GM12878 (cell line): ENCODE measurements at regions of chr2 and their contacts with region 1.

Region 1: DNA sequence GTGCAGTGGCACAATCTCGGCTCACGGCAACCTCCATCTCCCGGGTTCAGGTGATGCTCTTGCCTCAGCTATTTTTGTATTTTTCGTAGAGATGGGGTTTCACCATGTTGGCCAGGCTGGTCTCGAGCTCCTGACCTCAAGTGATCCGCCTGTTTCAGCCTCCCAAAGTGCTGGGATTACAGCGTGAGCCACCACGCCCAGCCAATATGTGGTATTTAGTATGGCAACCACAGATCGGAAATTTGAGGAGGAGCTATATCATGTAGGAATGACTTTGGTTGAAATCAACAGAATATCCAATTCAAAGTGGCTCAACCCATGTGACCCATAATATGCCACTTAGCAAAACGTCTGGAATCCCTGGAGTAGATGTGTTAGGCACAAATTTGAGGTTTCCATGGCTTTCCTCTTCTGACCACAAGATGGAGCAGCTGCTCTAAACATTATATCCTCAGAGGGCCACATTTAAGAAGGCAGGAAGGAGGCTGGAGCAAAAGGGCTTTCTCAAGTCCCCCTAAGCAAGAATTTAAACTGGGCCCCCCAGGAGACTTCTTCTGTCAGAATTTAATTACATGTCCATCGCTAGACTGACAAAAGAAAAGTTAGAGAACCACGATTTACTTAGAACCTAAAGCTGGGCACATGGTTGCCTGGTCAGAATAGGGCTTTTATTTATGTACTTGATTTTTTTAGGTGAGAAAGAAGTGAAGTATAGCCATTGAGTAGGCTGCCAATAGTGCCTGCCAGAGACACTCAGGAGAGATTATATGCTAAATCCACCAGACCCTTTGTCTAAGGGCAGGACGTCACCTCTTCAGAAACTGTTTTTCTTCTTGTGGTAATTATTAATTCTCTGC is 49.6 kb upstream of the ITSN2 start:
- DNase-seq: peak; percentile 31
- ATAC-seq: peak; percentile 91
- H3K4me3 ChIP-seq: no peak overlapping the region
- H3K27ac ChIP-seq: no peak overlapping the region
- H3K4me1 ChIP-seq: no peaks in the 10 kb centered on the region
- H3K27me3 ChIP-seq: no peaks in the 10 kb centered on the region
- CTCF ChIP-seq: peak; percentile 79 to 89 (median 82)
- EP300 ChIP-seq: no peak
- POLR2A ChIP-seq: no peak
- RAD21 ChIP-seq: peak; percentile 97

Region 2: GRCh38 chr2:24394998-24395397 is 14.9 kb before region 1 on chr2:
- CTCF ChIA-PET with region 1: interaction called, 12 read pairs
- POLR2A ChIA-PET with region 1: no interaction called
- RAD21 ChIA-PET with region 1: no interaction called
- SMC1A ChIA-PET with region 1: interaction called, 6 read pairs
- in situ Hi-C with region 1: no loop called
- intact Hi-C with region 1: no loop called
- DNase-seq: no peak
- ATAC-seq: no peak
- H3K4me3 ChIP-seq: no peak overlapping the region
- H3K27ac ChIP-seq: no peak overlapping the region
- H3K4me1 ChIP-seq: no peaks in the 10 kb centered on the region
- H3K27me3 ChIP-seq: no peaks in the 10 kb centered on the region
- CTCF ChIP-seq: no peak
- EP300 ChIP-seq: no peak
- POLR2A ChIP-seq: no peak
- RAD21 ChIP-seq: no peak

Region 3: GRCh38 chr2:24448797-24449196 is 38.9 kb after region 1 on chr2:
- CTCF ChIA-PET with region 1: no interaction called
- POLR2A ChIA-PET with region 1: no interaction called
- RAD21 ChIA-PET with region 1: no interaction called
- SMC1A ChIA-PET with region 1: no interaction called
- in situ Hi-C with region 1: no loop called
- intact Hi-C with region 1: no loop called
- DNase-seq: no peak
- ATAC-seq: no peak
- H3K4me3 ChIP-seq: no peak overlapping the region
- H3K27ac ChIP-seq: no peak overlapping the region
- H3K4me1 ChIP-seq: no peaks in the 10 kb centered on the region
- H3K27me3 ChIP-seq: no peaks in the 10 kb centered on the region
- CTCF ChIP-seq: no peak
- EP300 ChIP-seq: no peak
- POLR2A ChIP-seq: no peak
- RAD21 ChIP-seq: no peak

Region 4: DNA sequence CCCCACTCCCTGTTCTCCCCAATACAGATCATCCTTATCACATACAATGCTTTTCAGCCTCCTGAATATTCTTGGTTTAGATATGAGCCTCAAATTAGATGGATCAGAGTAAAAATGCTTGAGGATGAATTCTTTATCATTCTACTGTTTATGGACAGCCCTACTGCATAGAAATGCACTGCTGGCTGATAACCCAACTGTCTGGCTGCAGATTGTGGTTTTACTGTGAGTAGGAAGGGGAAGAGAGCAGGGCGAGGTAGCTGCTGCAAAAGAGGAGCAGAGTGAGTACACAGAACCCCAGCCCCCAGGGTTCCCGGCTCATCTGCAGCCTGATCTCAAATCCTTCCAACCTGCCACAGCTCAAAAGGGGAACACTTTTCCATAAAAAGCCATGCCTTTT is 51.8 kb after region 1 on chr2:
- CTCF ChIA-PET with region 1: no interaction called
- POLR2A ChIA-PET with region 1: no interaction called
- RAD21 ChIA-PET with region 1: no interaction called
- SMC1A ChIA-PET with region 1: no interaction called
- in situ Hi-C with region 1: no loop called
- intact Hi-C with region 1: no loop called
- DNase-seq: no peak
- ATAC-seq: 0 out of 3 replicates have a peak, but pooled peaks have one; percentile 19
- H3K4me3 ChIP-seq: no peak overlapping the region
- H3K27ac ChIP-seq: no peak overlapping the region
- H3K4me1 ChIP-seq: no peaks in the 10 kb centered on the region
- H3K27me3 ChIP-seq: no peaks in the 10 kb centered on the region
- CTCF ChIP-seq: no peak
- EP300 ChIP-seq: no peak
- POLR2A ChIP-seq: no peak
- RAD21 ChIP-seq: no peak

Region 5: GRCh38 chr2:24792874-24793760 is 383.2 kb after region 1 on chr2 and contains the starts of genes CENPO and PTRHD1:
- CTCF ChIA-PET with region 1: interaction called, 10 read pairs
- POLR2A ChIA-PET with region 1: no interaction called
- RAD21 ChIA-PET with region 1: interaction called, 3 read pairs
- SMC1A ChIA-PET with region 1: interaction called, 3 read pairs
- in situ Hi-C with region 1: no loop called
- intact Hi-C with region 1: no loop called
- DNase-seq: peak; percentile 92
- ATAC-seq: peak; percentile 97
- H3K4me3 ChIP-seq: peak within 1 kb of the TSS; percentile 97
- H3K27ac ChIP-seq: peak within 1 kb of the TSS; percentile 98
- H3K4me1 ChIP-seq: peaks cover 6% of the 10 kb centered on the region
- H3K27me3 ChIP-seq: no peaks in the 10 kb centered on the region
- CTCF ChIP-seq: peak; percentile 36 to 40 (median 37); a peak in 5 of 6 replicates
- EP300 ChIP-seq: no peak
- POLR2A ChIP-seq: peak; percentile 93
- RAD21 ChIP-seq: no peak
- polyA plus RNA-seq, gene CENPO: 18.7 to 23.1 TPM
- polyA plus RNA-seq, gene PTRHD1: 30.6 to 43.9 TPM

Region 6: GRCh38 chr2:24818721-24819167 is 408.8 kb after region 1 on chr2:
- CTCF ChIA-PET with region 1: interaction called, 17 read pairs
- POLR2A ChIA-PET with region 1: no interaction called
- RAD21 ChIA-PET with region 1: interaction called, 4 read pairs
- SMC1A ChIA-PET with region 1: interaction called, 7 read pairs
- in situ Hi-C with region 1: no loop called
- intact Hi-C with region 1: no loop called
- DNase-seq: no peak
- ATAC-seq: no peak
- H3K4me3 ChIP-seq: no peak overlapping the region
- H3K27ac ChIP-seq: no peak overlapping the region
- H3K4me1 ChIP-seq: no peaks in the 10 kb centered on the region
- H3K27me3 ChIP-seq: no peaks in the 10 kb centered on the region
- CTCF ChIP-seq: no peak
- EP300 ChIP-seq: no peak
- POLR2A ChIP-seq: no peak
- RAD21 ChIP-seq: no peak

Region 7: DNA sequence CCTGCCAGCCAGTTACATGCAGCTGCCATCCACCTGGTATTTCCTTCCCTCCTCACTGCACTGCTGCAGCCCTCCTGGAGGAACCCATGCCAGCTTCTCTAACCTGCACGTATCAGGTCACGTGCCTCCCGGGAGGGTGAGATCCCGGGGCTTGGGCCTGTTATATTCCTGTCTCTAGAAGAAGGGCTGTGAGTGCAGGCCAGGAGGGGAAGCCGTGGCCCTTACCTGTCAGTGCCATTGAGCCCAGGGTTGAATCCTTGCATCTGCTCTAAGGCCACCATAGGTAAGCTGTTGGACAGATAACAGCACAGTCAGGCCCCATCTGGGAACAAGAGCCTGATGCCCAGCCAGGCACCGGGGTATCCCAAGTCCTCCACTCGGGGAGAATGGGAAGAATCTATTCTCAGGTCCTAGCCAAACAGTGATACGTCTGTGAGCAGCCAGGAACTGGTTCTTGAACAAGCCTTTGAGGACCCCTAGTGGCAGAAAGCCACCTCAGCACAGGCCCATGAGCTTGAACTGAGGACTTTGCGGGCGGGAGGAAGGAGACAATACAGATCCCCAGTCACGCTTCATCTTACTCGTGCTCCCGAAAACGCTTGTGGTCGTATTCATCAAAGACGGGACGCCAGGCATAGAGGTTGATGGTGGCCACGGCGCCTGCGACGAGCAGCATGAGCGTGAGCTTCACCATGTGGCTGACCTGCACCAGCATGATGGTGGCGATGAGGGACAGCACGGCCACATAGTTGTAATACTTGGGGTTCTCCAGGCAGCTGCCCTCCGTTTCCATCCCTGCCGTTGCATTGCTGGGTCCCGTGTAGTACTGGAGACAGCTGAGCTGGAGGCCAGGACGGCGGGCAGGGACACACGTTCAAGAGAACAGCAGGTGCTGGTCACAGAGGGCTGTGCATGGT is 417.7 kb after region 1 on chr2:
- CTCF ChIA-PET with region 1: interaction called, 124 read pairs
- POLR2A ChIA-PET with region 1: interaction called, 3 read pairs
- RAD21 ChIA-PET with region 1: interaction called, 66 read pairs
- SMC1A ChIA-PET with region 1: interaction called, 55 read pairs
- in situ Hi-C with region 1: loop called (anchors 5 kb)
- intact Hi-C with region 1: loop called (anchors 1 kb)
- DNase-seq: peak; percentile 24
- ATAC-seq: peak; percentile 96
- H3K4me3 ChIP-seq: no peak overlapping the region
- H3K27ac ChIP-seq: no peak overlapping the region
- H3K4me1 ChIP-seq: no peaks in the 10 kb centered on the region; the same call in 1 of the 2 replicates
- H3K27me3 ChIP-seq: no peaks in the 10 kb centered on the region
- CTCF ChIP-seq: peak; percentile 92 to 97 (median 92)
- EP300 ChIP-seq: no peak
- POLR2A ChIP-seq: peak; percentile 40; the same call in 1 of the 2 replicates
- RAD21 ChIP-seq: peak; percentile 95

Region 8: DNA sequence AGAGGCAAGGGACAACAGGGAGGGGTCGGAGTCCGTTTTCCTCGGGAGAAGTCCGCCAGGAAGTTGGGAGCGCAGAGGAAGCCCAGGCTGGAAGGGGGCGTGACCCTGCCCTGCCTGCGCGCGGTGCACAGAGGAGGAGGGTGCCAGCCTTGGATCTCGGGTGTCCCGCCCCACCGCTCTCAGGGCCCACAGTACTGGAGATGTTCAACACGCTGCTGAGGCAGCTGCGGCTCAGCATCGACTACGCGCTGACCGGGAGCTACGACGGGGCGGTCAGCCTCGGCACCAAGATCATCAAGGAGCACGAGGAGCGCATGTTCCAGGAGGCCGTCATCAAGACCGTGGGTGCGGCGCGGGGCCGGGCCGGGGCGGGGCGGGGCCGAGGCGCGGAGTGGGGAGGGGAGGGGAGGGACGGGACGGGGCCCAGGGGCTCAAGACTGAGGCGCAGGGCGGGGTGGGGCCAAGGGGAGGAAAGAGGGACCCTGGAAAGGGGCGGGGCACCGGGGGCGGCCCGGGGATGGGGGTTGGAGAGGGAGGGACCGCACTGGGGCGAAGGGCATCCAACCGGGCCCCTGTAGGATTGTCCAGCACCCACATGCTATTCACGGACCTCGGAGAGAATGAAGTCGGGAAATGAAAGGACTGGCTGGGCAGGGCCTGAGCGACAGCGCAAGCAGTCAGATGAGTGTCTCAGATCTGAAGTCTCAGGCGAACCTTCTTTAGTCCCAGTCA is 721.8 kb after region 1 on chr2:
- CTCF ChIA-PET with region 1: interaction called, 49 read pairs
- POLR2A ChIA-PET with region 1: no interaction called
- RAD21 ChIA-PET with region 1: interaction called, 21 read pairs
- SMC1A ChIA-PET with region 1: interaction called, 39 read pairs
- in situ Hi-C with region 1: loop called (anchors 5 kb)
- intact Hi-C with region 1: loop called (anchors 1 kb)
- DNase-seq: no peak
- ATAC-seq: no peak
- H3K4me3 ChIP-seq: no peak overlapping the region
- H3K27ac ChIP-seq: no peak overlapping the region
- H3K4me1 ChIP-seq: no peaks in the 10 kb centered on the region
- H3K27me3 ChIP-seq: peaks cover 0 to 5% of the 10 kb centered on the region in 2 experiments; a peak in 3 of 4 replicates
- CTCF ChIP-seq: no peak
- EP300 ChIP-seq: no peak
- POLR2A ChIP-seq: no peak
- RAD21 ChIP-seq: no peak